ENCODE measurements at regions of chr10 and their contacts with region 1.

Region 1: DNA sequence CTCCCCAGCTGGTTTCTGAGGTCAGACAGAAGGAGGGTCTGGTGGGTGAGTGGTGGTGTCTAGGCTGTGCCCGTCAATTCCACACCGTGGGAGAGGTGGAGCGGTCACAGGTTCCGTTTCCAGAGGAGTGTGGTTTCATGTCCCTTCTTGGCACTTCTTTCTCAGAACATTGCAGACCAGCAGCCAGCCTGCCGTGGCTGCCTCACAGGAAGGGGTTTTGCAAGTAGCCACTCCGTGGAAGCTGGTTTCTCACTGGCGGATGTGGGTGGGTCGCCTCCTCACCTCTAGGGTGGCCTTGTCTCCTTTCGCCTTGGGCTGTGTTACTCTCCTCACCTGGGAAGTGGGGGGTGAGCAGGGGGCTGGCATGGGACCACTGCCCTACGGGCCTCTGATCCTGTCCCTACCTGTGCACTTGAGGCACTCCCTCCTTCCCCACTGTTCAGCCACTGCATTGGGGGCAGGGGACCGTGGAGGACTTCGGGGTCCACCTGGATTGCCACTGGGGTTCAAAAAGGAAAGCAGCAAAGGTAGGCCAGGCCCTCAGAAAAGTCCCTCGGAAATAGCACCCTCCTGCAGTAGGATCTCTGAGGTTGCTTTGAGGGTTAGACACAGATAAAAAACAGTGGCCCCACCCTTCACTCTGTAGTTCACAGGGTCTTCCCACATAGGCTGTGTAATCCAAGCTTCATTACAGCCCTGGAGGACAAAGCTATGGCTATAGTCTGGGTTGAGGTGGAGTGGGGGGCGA is 33.9 kb downstream of the TSPAN14 start:
- DNase-seq: peak; percentile 73
- H3K4me3 Mint-ChIP-seq: peak overlapping the region; percentile 32
- H3K27ac Mint-ChIP-seq: peak overlapping the region; percentile 86
- H3K4me1 Mint-ChIP-seq: peaks cover 98% of the 10 kb centered on the region
- H3K27me3 Mint-ChIP-seq: no peaks in the 10 kb centered on the region

Region 2: DNA sequence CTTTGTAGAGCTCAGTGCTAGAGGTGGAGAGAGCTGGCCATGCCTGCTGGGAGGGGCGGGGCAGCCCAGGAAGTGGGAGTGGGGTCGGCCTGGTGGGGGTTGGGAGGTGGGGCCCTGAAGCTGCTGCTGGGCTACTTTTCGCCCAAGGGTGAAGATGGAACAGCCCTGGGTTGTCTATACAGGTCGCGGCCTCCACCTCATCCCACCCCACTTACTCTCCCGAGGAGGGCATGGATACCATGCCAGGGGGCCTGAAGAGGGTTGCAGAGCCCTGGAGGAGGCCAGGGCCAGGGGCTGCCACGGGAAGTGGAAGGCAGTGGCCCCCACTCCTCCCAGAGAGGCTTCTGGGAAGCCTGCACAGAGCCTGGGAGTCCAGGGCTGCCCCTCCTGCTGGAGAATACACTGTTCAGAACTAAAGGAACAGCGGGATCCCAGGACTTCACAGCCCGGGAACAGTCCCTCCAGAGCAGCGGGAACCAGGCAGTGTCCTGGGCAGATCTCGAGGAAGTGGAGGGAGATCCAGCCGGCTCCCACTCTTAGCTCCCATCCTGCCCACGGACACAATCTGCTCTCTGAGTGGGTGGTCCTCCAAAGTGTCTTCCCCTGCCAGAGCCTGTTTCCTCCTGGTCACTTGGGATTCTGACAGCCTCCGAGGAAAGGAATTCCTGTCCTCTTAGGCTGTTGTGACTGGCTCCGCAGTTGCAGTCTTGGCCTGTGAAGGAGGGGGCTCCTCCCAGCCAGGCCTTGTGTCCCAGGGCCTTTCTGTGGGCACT is 222.0 kb before region 1 on chr10:
- CTCF ChIA-PET with region 1: no interaction called
- intact Hi-C with region 1: no loop called
- DNase-seq: no peak
- H3K4me3 Mint-ChIP-seq: no peak overlapping the region
- H3K27ac Mint-ChIP-seq: no peak overlapping the region
- H3K4me1 Mint-ChIP-seq: no peaks in the 10 kb centered on the region
- H3K27me3 Mint-ChIP-seq: peaks cover 5% of the 10 kb centered on the region

Region 3: GRCh38 chr10:80421707-80422536 is 66.0 kb before region 1 on chr10:
- CTCF ChIA-PET with region 1: no interaction called
- intact Hi-C with region 1: no loop called
- DNase-seq: no peak
- H3K4me3 Mint-ChIP-seq: no peak overlapping the region
- H3K27ac Mint-ChIP-seq: no peak overlapping the region
- H3K4me1 Mint-ChIP-seq: no peaks in the 10 kb centered on the region
- H3K27me3 Mint-ChIP-seq: no peaks in the 10 kb centered on the region

Region 4: GRCh38 chr10:80459047-80459931 is 28.7 kb before region 1 on chr10:
- CTCF ChIA-PET with region 1: interaction called, 24 read pairs
- intact Hi-C with region 1: loop called (anchors 1 kb)
- DNase-seq: peak; percentile 83
- H3K4me3 Mint-ChIP-seq: peak overlapping the region; percentile 76
- H3K27ac Mint-ChIP-seq: peak overlapping the region; percentile 93
- H3K4me1 Mint-ChIP-seq: peaks cover 82% of the 10 kb centered on the region
- H3K27me3 Mint-ChIP-seq: no peaks in the 10 kb centered on the region